ENCODE measurements at regions of chr20 and their contacts with region 1.

Region 1: GRCh38 chr20:62755817-62756724 is 40.2 kb upstream of the MRGBP start:
- DNase-seq: no peak
- H3K4me3 ChIP-seq: no peak overlapping the region
- H3K27ac ChIP-seq: no peak overlapping the region
- H3K4me1 ChIP-seq: no peaks in the 10 kb centered on the region
- H3K27me3 ChIP-seq: no peaks in the 10 kb centered on the region
- CTCF ChIP-seq: no peak
- POLR2A ChIP-seq: no peak

Region 2: GRCh38 chr20:62508603-62509051 is 247.4 kb before region 1 on chr20:
- intact Hi-C with region 1: loop called (anchors 1 kb)
- DNase-seq: no peak
- H3K4me3 ChIP-seq: no peak overlapping the region
- H3K27ac ChIP-seq: no peak overlapping the region
- H3K4me1 ChIP-seq: no peaks in the 10 kb centered on the region
- H3K27me3 ChIP-seq: no peaks in the 10 kb centered on the region
- CTCF ChIP-seq: no peak
- POLR2A ChIP-seq: no peak